Natural killer cell (primary cell): ENCODE measurements at regions of chr2 and their contacts with region 1.

Region 1: DNA sequence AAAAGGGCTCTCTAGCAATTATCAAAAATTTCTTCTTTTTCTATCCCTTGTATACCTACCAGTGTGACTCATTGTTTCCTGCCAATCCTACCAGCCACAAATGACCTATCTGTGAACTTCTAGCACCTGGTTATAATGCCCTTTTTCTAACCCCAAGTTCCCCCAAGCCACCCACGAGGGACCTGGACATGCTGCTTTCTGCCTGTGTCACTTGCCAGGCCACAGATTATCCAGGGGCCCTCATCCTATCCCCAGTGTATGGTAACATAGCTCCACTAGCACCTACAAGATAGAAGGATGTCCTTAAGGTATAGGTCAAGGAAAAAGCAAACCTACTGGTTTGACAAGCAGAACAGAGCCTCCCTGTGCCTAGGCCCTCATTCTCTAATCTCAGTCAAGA is 26.8 kb downstream of the AAK1 start:
- DNase-seq: peak; percentile 35 to 52
- ATAC-seq: peak in 2 of 3 donors; percentile 42 to 60
- H3K4me3 ChIP-seq: no peak overlapping the region
- H3K4me3 Mint-ChIP-seq: peak overlapping the region; percentile 43
- H3K27ac ChIP-seq: peak overlapping the region; percentile 60
- H3K27ac Mint-ChIP-seq: no peak overlapping the region
- H3K4me1 ChIP-seq: peaks cover 72% of the 10 kb centered on the region
- H3K4me1 Mint-ChIP-seq: peaks cover 0 to 3% of the 10 kb centered on the region in 2 donors
- H3K27me3 ChIP-seq: no peaks in the 10 kb centered on the region
- H3K27me3 Mint-ChIP-seq: no peaks in the 10 kb centered on the region
- CTCF ChIP-seq: no peak

Region 2: DNA sequence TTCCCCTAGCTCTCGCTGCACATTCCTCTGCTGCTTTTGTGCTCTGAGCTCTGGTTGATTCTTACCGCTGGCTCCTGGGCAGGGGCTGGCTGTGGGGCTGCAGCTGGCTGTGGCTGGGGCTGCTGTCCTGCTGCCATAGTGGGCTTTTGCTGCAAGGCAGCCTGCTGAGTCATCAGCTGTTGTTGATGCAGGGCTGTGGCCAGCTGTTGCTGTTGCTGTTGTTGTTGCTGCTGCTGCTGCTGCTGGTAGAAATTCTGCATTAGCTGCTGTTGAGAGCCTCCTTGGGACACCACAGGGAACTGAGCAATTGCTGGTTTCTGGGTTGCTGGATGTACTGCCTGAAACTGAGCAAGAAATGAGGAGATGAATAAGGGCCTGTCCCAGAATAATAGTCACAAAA is 102.3 kb before region 1 on chr2:
- intact Hi-C with region 1: no loop called
- DNase-seq: no peak
- ATAC-seq: no peak
- H3K4me3 ChIP-seq: no peak overlapping the region
- H3K4me3 Mint-ChIP-seq: no peak overlapping the region
- H3K27ac ChIP-seq: no peak overlapping the region
- H3K27ac Mint-ChIP-seq: peak overlapping the region; percentile 5 to 56
- H3K4me1 ChIP-seq: no peaks in the 10 kb centered on the region
- H3K4me1 Mint-ChIP-seq: peaks cover 14 to 16% of the 10 kb centered on the region in 2 donors
- H3K27me3 ChIP-seq: no peaks in the 10 kb centered on the region
- H3K27me3 Mint-ChIP-seq: no peaks in the 10 kb centered on the region
- CTCF ChIP-seq: no peak

Region 3: DNA sequence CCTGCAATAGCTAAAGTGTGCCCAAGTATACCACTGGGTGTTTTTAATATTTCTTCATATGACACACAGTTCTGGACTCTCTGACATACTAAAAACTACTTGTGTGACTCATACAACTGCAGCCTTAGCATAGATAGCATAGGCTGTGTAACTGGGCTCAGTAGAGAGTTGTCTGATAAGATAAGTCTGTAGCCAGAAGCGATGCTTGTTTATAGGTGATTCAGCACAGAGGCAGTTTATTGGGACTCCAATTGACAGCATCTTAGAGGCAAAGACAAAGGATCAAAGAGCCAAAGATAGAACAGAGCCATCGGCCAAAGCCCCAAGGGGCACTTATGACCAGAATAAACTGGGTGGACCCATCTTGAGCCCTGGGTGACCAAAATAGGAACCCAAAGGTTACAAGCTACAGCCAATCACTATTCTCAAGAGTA is 15.6 kb before region 1 on chr2:
- intact Hi-C with region 1: loop called (anchors 2 kb)
- DNase-seq: no peak
- ATAC-seq: peak in 2 of 3 donors; percentile 59
- H3K4me3 ChIP-seq: no peak overlapping the region
- H3K4me3 Mint-ChIP-seq: no peak overlapping the region
- H3K27ac ChIP-seq: no peak overlapping the region
- H3K27ac Mint-ChIP-seq: peak overlapping the region; percentile 63 to 75
- H3K4me1 ChIP-seq: peaks cover 28% of the 10 kb centered on the region
- H3K4me1 Mint-ChIP-seq: peaks cover 72 to 80% of the 10 kb centered on the region in 2 donors
- H3K27me3 ChIP-seq: no peaks in the 10 kb centered on the region
- H3K27me3 Mint-ChIP-seq: no peaks in the 10 kb centered on the region
- CTCF ChIP-seq: no peak

Region 4: GRCh38 chr2:69628325-69629021 is 11.7 kb after region 1 on chr2:
- intact Hi-C with region 1: loop called (anchors 1 kb)
- DNase-seq: peak in 1 of 2 donors; percentile 35
- ATAC-seq: peak; percentile 66 to 78 (median 73)
- H3K4me3 ChIP-seq: no peak overlapping the region
- H3K4me3 Mint-ChIP-seq: no peak overlapping the region
- H3K27ac ChIP-seq: peak overlapping the region; percentile 34
- H3K27ac Mint-ChIP-seq: no peak overlapping the region
- H3K4me1 ChIP-seq: peaks cover 11% of the 10 kb centered on the region
- H3K4me1 Mint-ChIP-seq: peaks cover 18% of the 10 kb centered on the region in 2 donors
- H3K27me3 ChIP-seq: no peaks in the 10 kb centered on the region
- H3K27me3 Mint-ChIP-seq: no peaks in the 10 kb centered on the region
- CTCF ChIP-seq: no peak